Heart left ventricle (tissue), 16 donors: ENCODE measurements at regions of chr20 and their contacts with region 1.

Region 1: GRCh38 chr20:10469599-10469998 is 34.5 kb downstream of the SLX4IP start:
- DNase-seq: peak in 3 of 5 donors; percentile 43 to 48 (median 44)
- ATAC-seq: peak; percentile 72 to 82 (median 80)
- H3K4me3 ChIP-seq: no peak overlapping the region
- H3K27ac ChIP-seq: peak overlapping the region in 1 of 12 donors; percentile 50
- H3K4me1 ChIP-seq: peaks cover 0 to 62% (median 34%) of the 10 kb centered on the region in 12 donors
- H3K27me3 ChIP-seq: no peaks in the 10 kb centered on the region
- CTCF ChIP-seq: peak; percentile 49 to 80 (median 68)
- POLR2A ChIP-seq: no peak

Region 2: GRCh38 chr20:10402938-10403608 is 66.5 kb before region 1 on chr20:
- intact Hi-C with region 1: no loop called
- DNase-seq: no peak
- ATAC-seq: no peak
- H3K4me3 ChIP-seq: no peak overlapping the region
- H3K27ac ChIP-seq: no peak overlapping the region
- H3K4me1 ChIP-seq: peaks cover 0 to 11% (median 0%) of the 10 kb centered on the region in 12 donors
- H3K27me3 ChIP-seq: no peaks in the 10 kb centered on the region
- CTCF ChIP-seq: no peak
- POLR2A ChIP-seq: no peak

Region 3: DNA sequence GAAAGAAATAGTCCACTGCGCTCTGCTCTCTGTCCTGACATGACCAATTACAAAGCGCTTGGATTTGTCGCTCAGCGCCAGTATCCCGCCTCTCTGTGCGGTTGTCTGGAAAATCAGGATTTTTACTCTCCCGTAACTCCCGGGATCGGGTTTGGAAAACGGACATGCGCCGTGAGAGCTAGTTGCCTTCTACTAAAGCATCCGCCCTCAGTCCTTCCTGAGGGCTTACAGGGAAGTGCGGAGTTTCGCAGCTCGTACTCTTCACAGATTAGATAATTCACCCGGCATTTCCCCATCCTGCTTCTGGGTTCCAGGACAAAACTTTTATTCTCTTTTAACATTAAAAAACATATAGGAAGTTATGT is 35.1 kb before region 1 on chr20:
- intact Hi-C with region 1: loop called in 2 of 10 experiments (anchors 2 kb)
- DNase-seq: peak; percentile 92 to 95 (median 94)
- ATAC-seq: peak; percentile 91 to 95 (median 93)
- H3K4me3 ChIP-seq: peak overlapping the region; percentile 47 to 97 (median 82)
- H3K27ac ChIP-seq: peak overlapping the region; percentile 89 to 98 (median 92)
- H3K4me1 ChIP-seq: peaks cover 6 to 45% (median 28%) of the 10 kb centered on the region in 12 donors
- H3K27me3 ChIP-seq: no peaks in the 10 kb centered on the region
- CTCF ChIP-seq: no peak
- POLR2A ChIP-seq: peak; percentile 63 to 77

Region 4: DNA sequence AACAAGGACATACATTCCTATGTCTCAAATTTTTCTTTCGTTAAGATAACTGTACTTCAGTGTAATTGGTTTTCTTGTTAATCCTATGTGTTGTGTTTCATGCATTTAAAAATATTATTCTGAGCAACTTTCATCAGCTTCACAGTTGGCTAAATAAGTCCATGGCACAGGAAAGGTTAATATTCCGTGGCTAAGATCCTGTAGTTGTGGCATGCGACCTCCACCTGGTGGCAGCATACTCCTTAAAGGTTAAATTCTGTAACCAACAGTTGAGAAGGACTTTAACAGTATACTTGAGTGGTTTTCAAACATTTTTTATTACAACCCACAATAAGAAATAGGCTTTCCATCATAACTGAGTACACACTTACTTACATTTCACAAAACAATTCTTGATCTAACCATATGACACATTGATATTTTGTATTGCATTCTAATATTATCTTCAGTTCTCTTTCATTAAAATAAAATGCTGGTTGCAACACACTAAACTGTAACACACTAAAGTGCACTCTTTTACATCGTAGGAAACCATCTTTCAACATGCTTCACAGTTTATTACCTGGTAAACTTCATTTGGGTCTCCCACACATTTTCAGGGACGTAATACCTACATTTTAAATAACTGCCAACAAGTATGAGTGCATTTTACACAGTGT is 83.9 kb after region 1 on chr20:
- intact Hi-C with region 1: loop called in 3 of 10 experiments (anchors 5 to 10 kb)
- DNase-seq: peak; percentile 42 to 76 (median 60)
- ATAC-seq: peak; percentile 61 to 83 (median 66)
- H3K4me3 ChIP-seq: no peak overlapping the region
- H3K27ac ChIP-seq: no peak overlapping the region
- H3K4me1 ChIP-seq: peaks cover 0 to 43% (median 0%) of the 10 kb centered on the region in 12 donors
- H3K27me3 ChIP-seq: no peaks in the 10 kb centered on the region
- CTCF ChIP-seq: peak; percentile 68 to 89 (median 84)
- POLR2A ChIP-seq: no peak